ENCODE measurements at regions of chr22 and their contacts with region 1.

Region 1: DNA sequence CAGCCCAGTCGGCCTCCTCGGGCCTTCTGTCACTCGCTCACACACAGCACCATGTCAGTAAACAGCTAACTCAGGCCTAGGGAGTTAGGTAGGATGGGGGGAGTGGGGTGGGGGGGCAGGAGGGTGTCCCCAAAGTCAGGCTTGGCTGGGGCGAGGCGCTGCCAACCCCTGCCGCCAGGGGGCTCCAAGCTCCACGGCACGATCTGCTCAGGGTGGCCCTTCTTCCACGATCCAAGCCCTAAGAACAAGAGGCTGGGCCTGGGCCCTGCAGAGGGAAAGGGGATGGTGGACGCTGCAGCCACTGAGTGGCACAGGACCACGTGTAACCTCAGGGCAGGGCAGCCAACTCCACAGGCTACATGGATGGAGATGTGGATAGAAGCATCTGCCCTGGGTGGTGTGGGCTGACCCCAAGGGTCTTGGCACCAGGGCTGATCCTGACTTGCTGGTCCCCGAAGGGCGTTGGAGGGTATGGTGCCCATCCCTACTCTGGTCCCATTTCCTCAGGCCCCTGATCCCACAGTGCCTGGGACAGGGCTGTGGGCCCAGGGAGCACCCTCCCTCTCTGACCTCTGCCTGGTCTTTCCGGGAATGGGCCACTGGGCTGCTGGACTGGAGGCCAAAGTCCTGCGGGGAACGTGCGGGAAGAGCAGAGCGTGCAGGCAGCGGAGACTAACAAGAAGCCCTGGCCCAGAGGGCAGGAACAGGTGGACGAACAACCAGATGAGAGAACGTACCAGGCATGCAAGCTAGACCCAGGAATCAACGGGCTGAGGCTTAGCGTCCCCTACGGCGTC is 29.1 kb upstream of the TXNRD2 start:
- DNase-seq: no peak
- H3K4me3 ChIP-seq: no peak overlapping the region
- H3K27ac ChIP-seq: no peak overlapping the region
- H3K4me1 ChIP-seq: peaks cover 15% of the 10 kb centered on the region
- H3K27me3 ChIP-seq: no peaks in the 10 kb centered on the region
- CTCF ChIP-seq: peak; percentile 55 to 94 (median 59)
- POLR2A ChIP-seq: no peak

Region 2: GRCh38 chr22:19929586-19930550 is 40.8 kb before region 1 on chr22:
- intact Hi-C with region 1: no loop called
- DNase-seq: no peak
- H3K4me3 ChIP-seq: no peak overlapping the region
- H3K27ac ChIP-seq: no peak overlapping the region
- H3K4me1 ChIP-seq: no peaks in the 10 kb centered on the region
- H3K27me3 ChIP-seq: no peaks in the 10 kb centered on the region
- CTCF ChIP-seq: no peak
- POLR2A ChIP-seq: no peak

Region 3: GRCh38 chr22:20013382-20013871 is 42.8 kb after region 1 on chr22:
- intact Hi-C with region 1: loop called (anchors 2 kb)
- DNase-seq: no peak
- H3K4me3 ChIP-seq: no peak overlapping the region
- H3K27ac ChIP-seq: no peak overlapping the region
- H3K4me1 ChIP-seq: peaks cover 6% of the 10 kb centered on the region
- H3K27me3 ChIP-seq: no peaks in the 10 kb centered on the region
- CTCF ChIP-seq: peak in 2 of 3 experiments; percentile 57 to 78
- POLR2A ChIP-seq: no peak

Measured in vagina (tissue), 2 donors.